Breast epithelium (tissue), 4 donors: ENCODE measurements at regions of chr6 and their contacts with region 1.

Region 1: GRCh38 chr6:141017941-141018340 is 1114.8 kb upstream of the GJE1 start:
- DNase-seq: no peak
- H3K4me3 ChIP-seq: no peak overlapping the region
- H3K27ac ChIP-seq: no peak overlapping the region
- H3K4me1 ChIP-seq: no peaks in the 10 kb centered on the region
- H3K27me3 ChIP-seq: no peaks in the 10 kb centered on the region
- CTCF ChIP-seq: no peak
- POLR2A ChIP-seq: no peak

Region 2: DNA sequence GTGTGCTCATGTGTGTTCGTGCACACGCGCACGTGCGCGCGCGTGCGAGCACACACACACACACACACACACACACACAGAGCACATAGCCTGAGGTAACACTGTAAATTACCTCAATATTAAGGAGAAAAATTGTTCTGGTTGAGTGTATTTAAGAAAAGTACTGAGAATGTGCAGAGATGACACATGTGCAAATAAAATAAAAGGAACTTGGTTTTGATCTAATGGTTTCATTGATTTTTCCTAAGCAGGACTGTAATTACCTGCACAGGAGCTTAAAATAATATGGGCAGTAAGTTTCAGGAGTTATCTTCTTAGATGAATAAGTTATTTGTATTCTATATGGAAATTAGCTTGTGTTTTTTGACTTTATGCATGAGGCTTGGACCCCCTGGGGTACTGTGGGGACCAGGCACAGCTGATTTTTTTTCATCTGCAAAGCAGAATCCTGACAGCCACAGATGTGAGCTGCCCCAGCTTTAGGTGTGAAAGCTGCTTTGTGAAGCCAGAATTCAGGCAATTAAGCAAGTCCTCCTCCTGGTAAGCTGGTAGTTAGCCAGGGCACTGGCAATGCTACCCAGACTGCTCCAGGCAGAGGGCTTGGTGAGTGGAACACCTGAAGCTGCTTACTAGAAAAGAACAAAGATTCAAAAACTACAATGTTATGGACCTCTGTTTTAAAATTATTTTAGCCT is 602.8 kb before region 1 on chr6:
- intact Hi-C with region 1: loop called (anchors 5 kb)
- DNase-seq: no peak
- H3K4me3 ChIP-seq: no peak overlapping the region
- H3K27ac ChIP-seq: no peak overlapping the region
- H3K4me1 ChIP-seq: no peaks in the 10 kb centered on the region
- H3K27me3 ChIP-seq: no peaks in the 10 kb centered on the region
- CTCF ChIP-seq: no peak
- POLR2A ChIP-seq: no peak

Region 3: GRCh38 chr6:140784573-140784972 is 233.4 kb before region 1 on chr6:
- intact Hi-C with region 1: no loop called
- DNase-seq: no peak
- H3K4me3 ChIP-seq: no peak overlapping the region
- H3K27ac ChIP-seq: no peak overlapping the region
- H3K4me1 ChIP-seq: no peaks in the 10 kb centered on the region
- H3K27me3 ChIP-seq: no peaks in the 10 kb centered on the region
- CTCF ChIP-seq: no peak
- POLR2A ChIP-seq: no peak

Region 4: GRCh38 chr6:141033101-141033500 is 15.2 kb after region 1 on chr6:
- intact Hi-C with region 1: no loop called
- DNase-seq: no peak
- H3K4me3 ChIP-seq: no peak overlapping the region
- H3K27ac ChIP-seq: no peak overlapping the region
- H3K4me1 ChIP-seq: no peaks in the 10 kb centered on the region
- H3K27me3 ChIP-seq: no peaks in the 10 kb centered on the region
- CTCF ChIP-seq: no peak
- POLR2A ChIP-seq: no peak

Region 5: DNA sequence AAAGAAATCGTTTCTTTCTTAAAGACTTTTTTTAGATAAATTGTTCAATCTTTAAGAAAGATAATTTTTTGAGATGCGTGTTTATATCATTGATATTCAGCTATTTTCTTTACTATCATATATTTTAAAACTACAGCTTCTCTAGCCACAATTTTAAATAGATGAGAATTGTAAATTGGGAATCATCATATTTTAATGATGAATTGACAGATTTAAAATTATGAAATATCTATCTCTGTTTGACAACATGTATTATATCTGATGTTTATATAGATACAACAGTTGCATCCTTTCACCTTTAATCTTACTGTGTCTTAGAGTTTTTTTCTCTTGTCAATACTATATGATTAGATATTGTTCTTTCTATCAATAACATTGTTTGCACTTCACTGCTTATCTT is 352.5 kb after region 1 on chr6:
- intact Hi-C with region 1: no loop called
- DNase-seq: no peak
- H3K4me3 ChIP-seq: no peak overlapping the region
- H3K27ac ChIP-seq: no peak overlapping the region
- H3K4me1 ChIP-seq: no peaks in the 10 kb centered on the region
- H3K27me3 ChIP-seq: no peaks in the 10 kb centered on the region
- CTCF ChIP-seq: no peak
- POLR2A ChIP-seq: no peak